ENCODE measurements at regions of chrX and their contacts with region 1.

Region 1: GRCh38 chrX:37787423-37787869 is 7.6 kb downstream of the CYBB start:
- DNase-seq: peak in 3 of 14 experiments; percentile 19 to 35 (median 20)
- ATAC-seq: no peak
- H3K4me3 ChIP-seq: no peak overlapping the region
- H3K4me3 Mint-ChIP-seq: peak overlapping the region; percentile 4
- H3K27ac ChIP-seq: no peak overlapping the region
- H3K27ac Mint-ChIP-seq: peak overlapping the region; percentile 82
- H3K4me1 ChIP-seq: peaks cover 17% of the 10 kb centered on the region
- H3K4me1 Mint-ChIP-seq: peaks cover 45% of the 10 kb centered on the region
- H3K27me3 ChIP-seq: no peaks in the 10 kb centered on the region
- H3K27me3 Mint-ChIP-seq: no peaks in the 10 kb centered on the region
- CTCF ChIP-seq: no peak

Region 2: DNA sequence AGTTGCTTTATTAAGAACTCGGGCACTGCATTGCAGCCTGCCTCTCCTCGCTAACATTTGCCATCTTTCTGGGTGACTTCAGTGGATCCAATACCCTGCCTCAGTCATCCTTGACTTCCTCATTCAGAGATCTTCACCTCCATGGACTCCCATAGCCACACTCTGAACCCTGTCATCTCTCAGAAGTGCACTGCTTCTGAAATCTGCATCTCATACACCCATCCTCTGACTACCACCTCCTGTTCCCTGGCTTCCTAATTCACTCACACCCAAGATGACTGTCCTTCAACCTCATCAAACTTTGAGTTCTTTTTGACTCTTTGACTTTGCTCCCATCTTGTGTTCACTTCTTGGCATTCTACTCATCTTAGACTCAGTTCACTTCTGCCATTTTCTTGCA is 32.9 kb before region 1 on chrX:
- CTCF ChIA-PET with region 1: no interaction called
- POLR2A ChIA-PET with region 1: no interaction called
- intact Hi-C with region 1: loop called in 1 of 2 experiments (anchors 5 kb)
- DNase-seq: peak in 1 of 14 experiments; percentile 14
- ATAC-seq: no peak
- H3K4me3 ChIP-seq: no peak overlapping the region
- H3K4me3 Mint-ChIP-seq: no peak overlapping the region
- H3K27ac ChIP-seq: peak overlapping the region in 1 of 2 donors; percentile 45
- H3K27ac Mint-ChIP-seq: no peak overlapping the region
- H3K4me1 ChIP-seq: peaks cover 39% of the 10 kb centered on the region
- H3K4me1 Mint-ChIP-seq: peaks cover 15% of the 10 kb centered on the region
- H3K27me3 ChIP-seq: no peaks in the 10 kb centered on the region
- H3K27me3 Mint-ChIP-seq: no peaks in the 10 kb centered on the region
- CTCF ChIP-seq: no peak

Region 3: GRCh38 chrX:38610849-38611248 is 823.4 kb after region 1 on chrX:
- CTCF ChIA-PET with region 1: no interaction called
- POLR2A ChIA-PET with region 1: no interaction called
- intact Hi-C with region 1: no loop called
- DNase-seq: no peak
- ATAC-seq: no peak
- H3K4me3 ChIP-seq: no peak overlapping the region
- H3K4me3 Mint-ChIP-seq: no peak overlapping the region
- H3K27ac ChIP-seq: no peak overlapping the region
- H3K27ac Mint-ChIP-seq: no peak overlapping the region
- H3K4me1 ChIP-seq: no peaks in the 10 kb centered on the region
- H3K4me1 Mint-ChIP-seq: no peaks in the 10 kb centered on the region
- H3K27me3 ChIP-seq: no peaks in the 10 kb centered on the region
- H3K27me3 Mint-ChIP-seq: no peaks in the 10 kb centered on the region
- CTCF ChIP-seq: no peak

Measured in CD4-positive, alpha-beta T cell (primary cell).